HepG2 (cell line): ENCODE measurements at regions of chr1 and their contacts with region 1.

Region 1: DNA sequence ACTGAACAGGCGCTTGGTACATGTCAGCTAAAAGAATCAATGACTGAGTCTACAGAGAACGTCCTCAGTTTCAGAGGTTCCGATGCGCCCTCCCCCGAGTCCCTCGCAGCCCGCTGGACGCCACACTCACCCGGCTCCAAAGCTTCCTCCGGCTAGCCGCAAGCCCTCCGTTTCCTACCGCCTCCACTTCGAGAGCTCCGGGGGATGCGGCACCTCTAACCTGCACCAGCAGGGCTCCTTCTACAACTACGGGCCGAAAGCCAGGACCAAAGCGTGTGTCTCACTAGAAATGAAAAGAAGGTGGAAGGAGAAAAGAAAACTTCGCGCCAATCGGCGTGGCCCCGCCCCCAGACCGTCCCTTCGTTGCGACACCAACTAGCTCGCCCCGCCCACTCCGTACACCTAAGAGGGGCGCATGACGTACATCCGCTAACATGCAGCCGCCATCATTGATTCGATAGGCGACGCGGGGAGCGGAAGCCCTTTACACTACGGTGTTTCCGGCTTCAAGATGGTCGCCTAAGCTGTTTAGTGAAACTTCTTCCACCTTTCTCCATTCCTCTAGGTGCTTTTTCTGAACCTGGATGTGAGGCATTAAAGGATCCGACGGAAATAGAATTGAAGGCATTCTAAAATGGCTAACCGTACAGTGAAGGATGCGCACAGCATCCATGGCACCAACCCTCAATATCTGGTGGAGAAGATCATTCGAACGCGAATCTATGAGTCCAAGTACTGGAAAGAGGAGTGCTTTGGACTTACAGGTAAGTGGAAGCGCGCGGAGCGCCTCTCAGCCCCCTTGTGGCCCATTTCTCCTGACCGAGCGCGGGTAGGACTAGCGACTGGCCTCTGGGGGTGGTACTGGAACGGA is at the starts of genes ORC1 and PRPF38A:
- DNase-seq: peak; percentile 95
- ATAC-seq: peak; percentile 93
- H3K4me3 ChIP-seq: peak within 1 kb of the TSS; percentile 76 to 96 (median 87)
- H3K27ac ChIP-seq: peak within 1 kb of the TSS; percentile 97
- H3K4me1 ChIP-seq: peaks cover 34% of the 10 kb centered on the region
- H3K27me3 ChIP-seq: peaks cover 0 to 4% of the 10 kb centered on the region in 2 experiments; a peak in 1 of 5 replicates
- CTCF ChIP-seq: peak; percentile 60
- EP300 ChIP-seq: no peak
- POLR2A ChIP-seq: peak; percentile 86 to 94
- RAD21 ChIP-seq: peak; percentile 46; the same call in 1 of the 2 replicates
- total RNA-seq, gene ORC1: 23.5 and 32.5 TPM in 2 replicates
- total RNA-seq, gene PRPF38A: 45.5 and 60.0 TPM in 2 replicates

Region 2: GRCh38 chr1:52127181-52128180 is 276.9 kb before region 1 on chr1:
- CTCF ChIA-PET with region 1: no interaction called
- POLR2A ChIA-PET with region 1: no interaction called
- in situ Hi-C with region 1: no loop called
- intact Hi-C with region 1: loop called (anchors 1 kb)
- DNase-seq: peak; percentile 62
- ATAC-seq: peak; percentile 94
- H3K4me3 ChIP-seq: no peak overlapping the region
- H3K27ac ChIP-seq: no peak overlapping the region
- H3K4me1 ChIP-seq: peaks cover 16% of the 10 kb centered on the region
- H3K27me3 ChIP-seq: no peaks in the 10 kb centered on the region
- CTCF ChIP-seq: peak; percentile 79
- EP300 ChIP-seq: no peak
- POLR2A ChIP-seq: no peak
- RAD21 ChIP-seq: peak; percentile 68

Region 3: GRCh38 chr1:52288286-52288685 is 116.1 kb before region 1 on chr1:
- CTCF ChIA-PET with region 1: no interaction called
- POLR2A ChIA-PET with region 1: no interaction called
- in situ Hi-C with region 1: no loop called
- intact Hi-C with region 1: no loop called
- DNase-seq: no peak
- ATAC-seq: no peak
- H3K4me3 ChIP-seq: no peak overlapping the region
- H3K27ac ChIP-seq: no peak overlapping the region
- H3K4me1 ChIP-seq: peaks cover 4% of the 10 kb centered on the region
- H3K27me3 ChIP-seq: no peaks in the 10 kb centered on the region
- CTCF ChIP-seq: no peak
- EP300 ChIP-seq: no peak
- POLR2A ChIP-seq: no peak
- RAD21 ChIP-seq: no peak

Region 4: DNA sequence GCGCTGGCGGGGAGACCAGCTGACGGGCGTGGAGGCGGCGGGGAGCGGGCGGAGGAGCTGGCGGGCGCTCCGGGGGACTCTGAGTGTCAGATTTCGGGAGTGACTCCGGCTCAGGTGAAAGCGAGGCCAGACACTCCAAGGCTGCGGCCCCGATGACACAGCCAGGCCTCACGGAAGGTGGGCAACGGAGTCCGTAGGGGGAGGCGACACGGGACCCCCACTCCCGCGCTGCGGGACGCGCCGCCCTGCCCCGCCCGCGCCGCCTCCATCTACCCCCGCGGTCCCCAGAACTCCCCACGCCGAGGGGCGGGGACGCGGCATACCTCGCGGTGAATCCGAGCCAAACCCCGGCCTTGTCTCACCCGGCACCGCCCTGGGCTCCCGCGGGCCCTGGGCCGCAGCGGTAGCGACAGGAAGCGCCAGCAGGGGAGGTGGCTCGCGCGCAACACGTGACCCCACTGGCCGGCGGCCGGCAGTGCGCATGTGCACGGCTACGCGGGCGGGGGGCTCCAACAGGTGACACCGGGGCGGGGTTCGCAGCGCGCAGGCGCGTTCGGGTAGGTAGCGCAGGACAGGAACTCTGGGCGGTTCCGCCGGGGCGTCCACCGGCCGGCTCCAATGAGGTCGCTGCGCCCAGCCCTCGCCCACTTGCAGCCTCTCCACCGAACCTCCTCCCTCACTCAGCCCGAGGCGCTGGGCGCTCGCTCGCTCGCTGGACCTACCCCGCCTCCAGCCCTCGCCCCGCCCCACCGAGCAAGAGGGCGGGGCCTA is 38.4 kb before region 1 on chr1 and contains the start of gene CC2D1B:
- CTCF ChIA-PET with region 1: no interaction called
- POLR2A ChIA-PET with region 1: interaction called, 14 read pairs
- in situ Hi-C with region 1: no loop called
- intact Hi-C with region 1: loop called (anchors 1 kb)
- DNase-seq: peak; percentile 95
- ATAC-seq: peak; percentile 93
- H3K4me3 ChIP-seq: peak within 1 kb of the TSS; percentile 98 to 100 (median 99)
- H3K27ac ChIP-seq: peak within 1 kb of the TSS; percentile 83
- H3K4me1 ChIP-seq: peaks cover 45% of the 10 kb centered on the region
- H3K27me3 ChIP-seq: no peaks in the 10 kb centered on the region; a peak in 1 of 5 replicates
- CTCF ChIP-seq: peak; percentile 21; the same call in 1 of the 2 replicates
- EP300 ChIP-seq: no peak
- POLR2A ChIP-seq: peak; percentile 82 to 93
- RAD21 ChIP-seq: peak; percentile 30
- total RNA-seq, gene CC2D1B: 11.5 and 19.2 TPM in 2 replicates

Region 5: DNA sequence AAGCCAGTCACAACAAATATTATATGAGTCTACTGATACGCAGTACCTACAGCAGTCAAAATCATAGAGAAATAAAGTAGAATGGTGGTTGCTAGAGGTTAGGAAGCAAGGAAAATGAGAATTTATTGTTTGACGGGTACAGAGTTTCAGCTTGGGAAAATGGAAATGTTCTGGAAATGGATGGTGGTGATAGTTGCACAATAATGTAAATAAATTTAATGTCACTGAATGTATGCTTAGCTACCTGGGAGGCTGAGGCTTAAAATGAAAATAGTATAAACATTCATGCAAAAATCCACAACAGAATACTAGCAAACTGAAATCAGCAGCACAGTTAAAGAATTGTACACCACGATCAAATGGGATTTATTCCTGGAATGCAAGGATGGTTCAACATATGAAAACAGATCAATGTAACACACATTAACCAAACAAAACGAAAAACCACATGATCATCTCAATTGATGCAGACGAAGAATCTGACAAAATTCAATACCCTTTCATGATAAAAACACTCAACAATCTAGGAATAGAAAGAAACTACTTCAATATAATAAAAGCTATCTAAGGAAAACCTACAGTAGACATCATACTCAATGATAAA is 137.8 kb after region 1 on chr1:
- CTCF ChIA-PET with region 1: no interaction called
- POLR2A ChIA-PET with region 1: no interaction called
- in situ Hi-C with region 1: no loop called
- intact Hi-C with region 1: no loop called
- DNase-seq: no peak
- ATAC-seq: no peak
- H3K4me3 ChIP-seq: no peak overlapping the region
- H3K27ac ChIP-seq: no peak overlapping the region
- H3K4me1 ChIP-seq: peaks cover 6% of the 10 kb centered on the region; the same call in 1 of the 2 replicates
- H3K27me3 ChIP-seq: no peaks in the 10 kb centered on the region
- CTCF ChIP-seq: no peak
- EP300 ChIP-seq: no peak
- POLR2A ChIP-seq: no peak
- RAD21 ChIP-seq: no peak

Region 6: GRCh38 chr1:52552505-52553361 is 148.4 kb after region 1 on chr1 and contains the start of gene TUT4:
- CTCF ChIA-PET with region 1: no interaction called
- POLR2A ChIA-PET with region 1: interaction called, 13 read pairs
- in situ Hi-C with region 1: no loop called
- intact Hi-C with region 1: no loop called
- DNase-seq: peak; percentile 79
- ATAC-seq: peak; percentile 79
- H3K4me3 ChIP-seq: peak within 1 kb of the TSS; percentile 90 to 94 (median 93)
- H3K27ac ChIP-seq: peak within 1 kb of the TSS; percentile 95
- H3K4me1 ChIP-seq: peaks cover 40% of the 10 kb centered on the region
- H3K27me3 ChIP-seq: no peaks in the 10 kb centered on the region; a peak in 1 of 5 replicates
- CTCF ChIP-seq: peak; percentile 35
- EP300 ChIP-seq: no peak
- POLR2A ChIP-seq: peak in 1 of 2 experiments; percentile 60; a peak in 2 of 4 replicates
- RAD21 ChIP-seq: peak; percentile 31; the same call in 1 of the 2 replicates
- total RNA-seq, gene TUT4: 44.7 and 47.8 TPM in 2 replicates

Region 7: GRCh38 chr1:52683367-52683940 is 279.1 kb after region 1 on chr1:
- CTCF ChIA-PET with region 1: no interaction called
- POLR2A ChIA-PET with region 1: no interaction called
- in situ Hi-C with region 1: no loop called
- intact Hi-C with region 1: loop called (anchors 10 kb)
- DNase-seq: no peak
- ATAC-seq: no peak
- H3K4me3 ChIP-seq: no peak overlapping the region
- H3K27ac ChIP-seq: no peak overlapping the region
- H3K4me1 ChIP-seq: peaks cover 8% of the 10 kb centered on the region; the same call in 1 of the 2 replicates
- H3K27me3 ChIP-seq: no peaks in the 10 kb centered on the region
- CTCF ChIP-seq: no peak
- EP300 ChIP-seq: no peak
- POLR2A ChIP-seq: no peak
- RAD21 ChIP-seq: no peak